CD4-positive, alpha-beta T cell (primary cell): ENCODE measurements at regions of chr10 and their contacts with region 1.

Region 1: DNA sequence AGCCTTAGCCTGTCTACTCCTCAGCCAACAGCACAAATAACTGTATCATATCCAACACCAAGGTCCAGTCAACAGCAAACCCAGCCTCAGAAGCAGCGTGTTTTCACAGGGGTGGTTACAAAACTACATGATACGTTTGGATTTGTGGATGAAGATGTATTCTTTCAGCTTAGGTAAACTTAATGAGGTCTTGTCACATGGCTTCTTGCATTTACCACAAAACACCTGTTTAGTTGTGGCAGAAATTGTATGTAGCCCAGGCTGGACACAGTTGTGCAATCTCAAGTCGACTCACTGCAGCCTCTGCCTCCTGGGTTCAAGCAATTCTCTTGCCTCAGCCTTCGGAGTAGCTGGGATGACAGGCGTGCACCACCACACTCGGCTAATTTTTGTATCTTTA is 21.4 kb downstream of the CCAR1 start:
- DNase-seq: no peak
- ATAC-seq: no peak
- H3K4me3 ChIP-seq: no peak overlapping the region
- H3K4me3 Mint-ChIP-seq: no peak overlapping the region
- H3K27ac ChIP-seq: no peak overlapping the region
- H3K27ac Mint-ChIP-seq: no peak overlapping the region
- H3K4me1 ChIP-seq: no peaks in the 10 kb centered on the region
- H3K4me1 Mint-ChIP-seq: peaks cover 6% of the 10 kb centered on the region
- H3K27me3 ChIP-seq: no peaks in the 10 kb centered on the region
- H3K27me3 Mint-ChIP-seq: no peaks in the 10 kb centered on the region
- CTCF ChIP-seq: no peak

Region 2: DNA sequence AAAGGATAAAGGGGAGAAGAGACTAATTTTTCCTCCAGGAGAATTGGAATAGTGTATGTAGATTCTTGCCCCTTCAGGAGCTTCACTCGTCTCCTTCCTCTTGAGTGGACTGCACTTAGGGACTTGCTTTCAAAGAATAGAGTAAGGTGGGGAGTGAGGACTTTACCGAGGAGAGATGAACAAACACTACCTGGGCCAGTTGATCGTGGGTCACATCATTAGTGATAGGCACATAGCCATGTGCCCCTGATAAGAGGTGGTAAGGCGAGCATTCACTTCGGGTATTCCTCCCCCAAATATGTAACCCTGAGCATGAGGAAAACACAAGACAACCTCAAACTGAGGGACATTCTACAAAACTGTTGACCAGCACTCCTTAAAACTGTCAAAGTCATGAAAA is 231.6 kb after region 1 on chr10:
- CTCF ChIA-PET with region 1: no interaction called
- POLR2A ChIA-PET with region 1: no interaction called
- intact Hi-C with region 1: loop called in 1 of 2 experiments (anchors 10 kb)
- DNase-seq: no peak
- ATAC-seq: no peak
- H3K4me3 ChIP-seq: no peak overlapping the region
- H3K4me3 Mint-ChIP-seq: no peak overlapping the region
- H3K27ac ChIP-seq: no peak overlapping the region
- H3K27ac Mint-ChIP-seq: no peak overlapping the region
- H3K4me1 ChIP-seq: peaks cover 4% of the 10 kb centered on the region
- H3K4me1 Mint-ChIP-seq: peaks cover 10% of the 10 kb centered on the region
- H3K27me3 ChIP-seq: no peaks in the 10 kb centered on the region
- H3K27me3 Mint-ChIP-seq: no peaks in the 10 kb centered on the region
- CTCF ChIP-seq: no peak